ENCODE measurements at regions of chr5 and their contacts with region 1.

Region 1: GRCh38 chr5:42487821-42488220 is 64.6 kb downstream of the GHR start:
- DNase-seq: no peak

Region 2: GRCh38 chr5:42522783-42523182 is 35.0 kb after region 1 on chr5:
- intact Hi-C with region 1: loop called in 1 of 2 experiments (anchors 2 kb)
- DNase-seq: no peak

Measured in posterior vena cava (tissue), 2 donors.